Posterior vena cava (tissue), 2 donors: ENCODE measurements at regions of chr10 and their contacts with region 1.

Region 1: GRCh38 chr10:30359373-30360206 is 10.5 kb upstream of the MTPAP start:
- DNase-seq: no peak

Region 2: GRCh38 chr10:29356786-29357330 is 1002.7 kb before region 1 on chr10:
- intact Hi-C with region 1: no loop called
- DNase-seq: no peak

Region 3: DNA sequence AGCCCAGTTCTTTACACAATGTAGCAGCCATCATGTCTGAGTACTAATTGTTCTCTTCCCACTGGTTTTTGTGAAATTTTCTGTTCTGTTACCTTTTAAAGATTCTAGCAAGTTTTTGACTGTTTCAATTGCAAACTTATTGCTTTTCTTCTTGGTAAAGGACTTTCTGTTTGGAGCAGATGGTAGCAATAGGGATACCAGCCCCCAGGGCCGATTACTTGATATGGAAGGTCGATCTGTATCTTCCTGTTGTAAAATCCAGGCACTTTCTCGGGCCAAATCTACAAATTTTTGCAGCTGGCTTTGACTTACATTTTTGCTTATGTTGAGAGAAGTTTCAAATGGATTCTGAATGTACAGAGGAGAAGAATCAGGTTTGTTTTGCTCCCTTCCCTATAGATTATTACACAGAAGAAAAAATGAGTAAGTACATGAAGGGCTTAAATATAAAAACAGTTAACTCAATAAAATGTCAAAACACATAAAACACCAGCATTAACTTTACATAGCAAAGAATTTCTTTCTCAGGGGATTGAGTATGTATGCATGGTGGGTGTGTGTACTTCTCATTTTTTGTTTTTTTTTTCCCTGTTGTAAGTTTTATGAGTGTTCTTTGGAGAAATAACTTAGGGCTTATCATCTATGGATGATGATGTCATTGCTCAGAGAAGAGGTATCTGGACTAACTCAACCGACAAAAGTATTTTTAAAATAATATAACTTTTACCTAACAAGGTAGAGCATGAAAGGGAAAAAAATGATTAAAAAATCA is 45.8 kb before region 1 on chr10:
- intact Hi-C with region 1: no loop called
- DNase-seq: no peak

Region 4: GRCh38 chr10:30324448-30325110 is 35.0 kb before region 1 on chr10:
- intact Hi-C with region 1: loop called in 1 of 2 experiments (anchors 1 kb)
- DNase-seq: no peak